ENCODE measurements at regions of chr4 and their contacts with region 1.

Region 1: GRCh38 chr4:21790438-21791029 is 158.0 kb downstream of the KCNIP4 start:
- DNase-seq: peak; percentile 54
- ATAC-seq: no peak; the same call in 1 of the 2 replicates
- H3K4me3 ChIP-seq: no peak overlapping the region
- H3K27ac ChIP-seq: no peak overlapping the region
- H3K4me1 ChIP-seq: no peaks in the 10 kb centered on the region; the same call in 1 of the 2 replicates
- H3K27me3 ChIP-seq: no peaks in the 10 kb centered on the region
- CTCF ChIP-seq: peak; percentile 62
- POLR2A ChIP-seq: no peak
- RAD21 ChIP-seq: peak; percentile 64

Region 2: DNA sequence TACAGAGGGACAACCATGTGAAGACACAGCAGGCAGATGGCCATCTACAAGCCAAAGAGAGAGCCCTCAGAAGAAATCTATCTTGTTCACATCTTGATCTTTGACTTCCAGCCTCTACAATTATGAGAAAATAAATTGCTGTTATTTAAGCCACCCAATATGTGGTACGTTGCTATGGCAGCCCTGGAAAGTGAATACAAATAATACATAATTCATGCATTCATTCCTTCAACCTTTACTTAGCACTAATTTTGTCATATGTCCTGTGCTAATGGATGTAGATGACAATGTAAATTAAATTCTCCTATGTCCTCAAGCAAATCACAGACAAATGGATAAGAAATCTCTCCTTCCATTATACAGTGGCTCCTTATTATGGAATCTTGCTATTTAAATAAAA is 728.6 kb before region 1 on chr4:
- CTCF ChIA-PET with region 1: no interaction called
- POLR2A ChIA-PET with region 1: no interaction called
- dilution Hi-C with region 1: no loop called
- in situ Hi-C with region 1: no loop called
- intact Hi-C with region 1: no loop called
- DNase-seq: no peak
- ATAC-seq: no peak
- H3K4me3 ChIP-seq: no peak overlapping the region
- H3K27ac ChIP-seq: no peak overlapping the region
- H3K4me1 ChIP-seq: no peaks in the 10 kb centered on the region
- H3K27me3 ChIP-seq: no peaks in the 10 kb centered on the region
- CTCF ChIP-seq: no peak
- POLR2A ChIP-seq: no peak
- RAD21 ChIP-seq: no peak

Region 3: DNA sequence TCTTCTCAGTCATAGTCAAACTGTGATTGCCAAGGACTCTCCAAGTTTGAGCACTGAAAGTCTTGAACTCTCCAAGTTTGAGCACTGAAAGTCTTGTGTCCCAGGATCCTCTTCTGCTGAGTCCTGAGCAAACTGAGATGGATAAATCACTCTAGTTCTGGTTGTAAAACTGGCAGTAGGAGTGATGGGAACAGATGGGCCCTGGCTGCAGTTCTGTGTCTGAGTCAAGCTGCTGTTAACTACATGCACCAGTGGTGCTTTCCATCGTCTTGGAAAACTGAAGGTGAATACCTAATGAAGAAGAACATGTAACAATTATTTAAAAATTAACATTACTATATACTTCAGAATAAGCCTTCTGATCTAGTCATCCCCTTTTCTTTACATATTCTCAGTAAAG is 185.6 kb after region 1 on chr4:
- CTCF ChIA-PET with region 1: no interaction called
- POLR2A ChIA-PET with region 1: no interaction called
- dilution Hi-C with region 1: no loop called
- in situ Hi-C with region 1: no loop called
- intact Hi-C with region 1: loop called (anchors 10 kb)
- DNase-seq: no peak
- ATAC-seq: no peak
- H3K4me3 ChIP-seq: no peak overlapping the region
- H3K27ac ChIP-seq: no peak overlapping the region
- H3K4me1 ChIP-seq: no peaks in the 10 kb centered on the region
- H3K27me3 ChIP-seq: no peaks in the 10 kb centered on the region
- CTCF ChIP-seq: no peak
- POLR2A ChIP-seq: no peak
- RAD21 ChIP-seq: no peak

Region 4: DNA sequence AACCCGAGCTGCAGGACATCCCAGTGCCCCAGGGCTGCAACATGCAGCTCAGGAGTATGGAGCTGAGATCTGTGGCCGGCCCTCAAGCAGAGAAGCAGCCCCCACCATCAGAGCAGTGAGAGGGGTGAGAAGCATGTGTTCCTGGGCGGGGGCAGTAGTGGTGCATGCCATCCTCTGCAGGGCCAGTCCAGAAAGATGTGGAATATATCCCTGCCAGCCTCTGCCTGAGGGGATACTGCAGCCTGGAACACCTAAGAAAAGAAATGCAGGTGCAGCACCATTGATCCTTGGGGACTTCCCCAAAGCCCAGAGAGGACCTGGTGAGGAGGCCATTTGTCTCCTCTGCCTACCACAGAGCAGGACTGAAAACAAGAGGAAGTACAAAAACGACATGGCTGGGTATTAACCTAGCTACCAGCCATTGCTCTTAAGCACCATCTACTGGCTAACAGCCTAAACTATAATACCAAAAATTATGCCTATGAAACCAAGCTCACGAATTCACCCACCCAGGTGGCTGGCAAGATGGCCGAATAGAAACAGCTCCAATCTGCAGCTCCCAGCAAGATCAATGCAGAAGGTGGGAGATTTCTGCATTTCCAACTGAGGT is 566.6 kb after region 1 on chr4:
- CTCF ChIA-PET with region 1: interaction called, 6 read pairs
- POLR2A ChIA-PET with region 1: no interaction called
- dilution Hi-C with region 1: no loop called
- in situ Hi-C with region 1: no loop called
- intact Hi-C with region 1: loop called (anchors 1 kb)
- DNase-seq: peak; percentile 32
- ATAC-seq: peak; percentile 87
- H3K4me3 ChIP-seq: no peak overlapping the region
- H3K27ac ChIP-seq: no peak overlapping the region
- H3K4me1 ChIP-seq: no peaks in the 10 kb centered on the region
- H3K27me3 ChIP-seq: no peaks in the 10 kb centered on the region
- CTCF ChIP-seq: peak; percentile 49
- POLR2A ChIP-seq: no peak
- RAD21 ChIP-seq: peak; percentile 53

Region 5: GRCh38 chr4:22515145-22515887 is 724.8 kb after region 1 on chr4:
- CTCF ChIA-PET with region 1: no interaction called
- POLR2A ChIA-PET with region 1: no interaction called
- dilution Hi-C with region 1: no loop called
- in situ Hi-C with region 1: no loop called
- intact Hi-C with region 1: loop called (anchors 5 kb)
- DNase-seq: peak; percentile 64
- ATAC-seq: peak; percentile 64
- H3K4me3 ChIP-seq: peak overlapping the region; percentile 56
- H3K27ac ChIP-seq: peak overlapping the region; percentile 54
- H3K4me1 ChIP-seq: peaks cover 7% of the 10 kb centered on the region
- H3K27me3 ChIP-seq: no peaks in the 10 kb centered on the region
- CTCF ChIP-seq: no peak
- POLR2A ChIP-seq: peak; percentile 26
- RAD21 ChIP-seq: no peak

Region 6: GRCh38 chr4:22688236-22688635 is 897.7 kb after region 1 on chr4:
- CTCF ChIA-PET with region 1: no interaction called
- POLR2A ChIA-PET with region 1: no interaction called
- dilution Hi-C with region 1: no loop called
- in situ Hi-C with region 1: no loop called
- intact Hi-C with region 1: loop called (anchors 1 kb)
- DNase-seq: no peak
- ATAC-seq: no peak
- H3K4me3 ChIP-seq: no peak overlapping the region
- H3K27ac ChIP-seq: no peak overlapping the region
- H3K4me1 ChIP-seq: no peaks in the 10 kb centered on the region
- H3K27me3 ChIP-seq: peaks cover 2% of the 10 kb centered on the region; the same call in 1 of the 2 replicates
- CTCF ChIP-seq: no peak
- POLR2A ChIP-seq: no peak
- RAD21 ChIP-seq: no peak